Activated CD4-positive, alpha-beta T cell treated with anti-CD3 and anti-CD28 coated beads, Interleukin-2, amount 10 ng/mL, durations not matched to agents 24 days and 14 days (primary cell): ENCODE measurements at regions of chr12 and their contacts with region 1.

Region 1: GRCh38 chr12:44847888-44848702 is 28.0 kb downstream of the NELL2 start:
- DNase-seq: peak; percentile 89
- H3K4me3 Mint-ChIP-seq: peak overlapping the region; percentile 74
- H3K27ac Mint-ChIP-seq: peak overlapping the region; percentile 96
- H3K4me1 Mint-ChIP-seq: peaks cover 55% of the 10 kb centered on the region
- H3K27me3 Mint-ChIP-seq: no peaks in the 10 kb centered on the region

Region 2: GRCh38 chr12:44812062-44812461 is 36.0 kb before region 1 on chr12:
- intact Hi-C with region 1: no loop called
- DNase-seq: peak; percentile 87
- H3K4me3 Mint-ChIP-seq: no peak overlapping the region
- H3K27ac Mint-ChIP-seq: no peak overlapping the region
- H3K4me1 Mint-ChIP-seq: peaks cover 21% of the 10 kb centered on the region
- H3K27me3 Mint-ChIP-seq: no peaks in the 10 kb centered on the region

Region 3: GRCh38 chr12:44827832-44828438 is 20.2 kb before region 1 on chr12:
- intact Hi-C with region 1: loop called (anchors 1 kb)
- DNase-seq: no peak
- H3K4me3 Mint-ChIP-seq: peak overlapping the region; percentile 64
- H3K27ac Mint-ChIP-seq: peak overlapping the region; percentile 83
- H3K4me1 Mint-ChIP-seq: peaks cover 39% of the 10 kb centered on the region
- H3K27me3 Mint-ChIP-seq: no peaks in the 10 kb centered on the region

Region 4: DNA sequence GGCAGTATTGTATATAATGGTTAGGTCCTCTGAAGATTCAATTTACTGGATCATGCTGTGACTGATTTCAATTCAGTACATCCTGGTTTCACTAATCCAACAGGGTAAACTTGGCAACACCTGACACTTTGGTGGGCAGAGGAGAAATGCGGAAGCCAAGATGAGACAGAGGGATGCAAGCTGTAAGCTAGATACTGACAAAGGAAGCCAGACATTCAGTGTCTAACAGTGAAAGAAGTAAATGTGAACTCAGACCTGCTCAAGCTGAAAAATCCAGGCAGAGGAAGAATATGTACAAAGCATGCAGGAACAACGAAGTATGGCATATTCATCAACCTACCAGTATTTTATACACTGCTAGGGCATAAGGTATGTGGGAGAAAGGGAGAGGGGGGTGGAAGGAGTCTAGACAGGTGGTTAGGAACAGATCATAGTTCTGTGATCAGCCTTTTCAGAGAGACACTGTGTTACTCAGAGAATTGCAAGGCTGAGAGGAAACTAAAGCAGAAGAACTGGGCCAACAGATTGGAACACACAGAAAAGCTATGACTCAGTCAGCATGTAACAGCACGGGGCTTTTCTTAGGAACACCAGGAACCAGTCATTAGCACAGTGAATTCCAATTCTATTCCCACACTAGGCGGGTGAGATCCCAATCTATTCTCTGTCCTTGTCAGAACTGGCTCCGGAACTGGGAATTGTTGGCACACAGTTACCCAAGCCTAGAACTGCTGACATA is 12.3 kb before region 1 on chr12:
- intact Hi-C with region 1: loop called (anchors 1 kb)
- DNase-seq: peak; percentile 72
- H3K4me3 Mint-ChIP-seq: peak overlapping the region; percentile 69
- H3K27ac Mint-ChIP-seq: peak overlapping the region; percentile 96
- H3K4me1 Mint-ChIP-seq: peaks cover 55% of the 10 kb centered on the region
- H3K27me3 Mint-ChIP-seq: no peaks in the 10 kb centered on the region

Region 5: GRCh38 chr12:44859998-44860689 is 12.0 kb after region 1 on chr12:
- intact Hi-C with region 1: loop called (anchors 1 kb)
- DNase-seq: no peak
- H3K4me3 Mint-ChIP-seq: no peak overlapping the region
- H3K27ac Mint-ChIP-seq: peak overlapping the region; percentile 36
- H3K4me1 Mint-ChIP-seq: peaks cover 42% of the 10 kb centered on the region
- H3K27me3 Mint-ChIP-seq: no peaks in the 10 kb centered on the region

Region 6: GRCh38 chr12:44875954-44876553 is 28.0 kb after region 1 on chr12 and contains the start of gene NELL2:
- intact Hi-C with region 1: loop called (anchors 1 kb)
- DNase-seq: peak; percentile 83
- H3K4me3 Mint-ChIP-seq: peak within 1 kb of the TSS; percentile 93
- H3K27ac Mint-ChIP-seq: peak within 1 kb of the TSS; percentile 89
- H3K4me1 Mint-ChIP-seq: peaks cover 39% of the 10 kb centered on the region
- H3K27me3 Mint-ChIP-seq: peaks cover 39% of the 10 kb centered on the region
- total RNA-seq, gene NELL2: 20.0 and 27.5 TPM in 2 replicates